Naive thymus-derived CD4-positive, alpha-beta T cell (primary cell): ENCODE measurements at regions of chr2 and their contacts with region 1.

Region 1: GRCh38 chr2:102442967-102443828 is 20.2 kb downstream of the IL18RAP start:
- DNase-seq: peak in 7 of 9 donors; percentile 16 to 58 (median 49)
- ATAC-seq: peak; percentile 89
- H3K4me3 ChIP-seq: no peak overlapping the region
- H3K4me3 Mint-ChIP-seq: peak overlapping the region in 6 of 10 donors; percentile 24 to 71 (median 36)
- H3K27ac ChIP-seq: no peak overlapping the region
- H3K27ac Mint-ChIP-seq: peak overlapping the region in 4 of 9 donors; percentile 19 to 46 (median 30)
- H3K4me1 ChIP-seq: peaks cover 0 to 5% of the 10 kb centered on the region in 2 donors
- H3K4me1 Mint-ChIP-seq: peaks cover 0 to 12% (median 7%) of the 10 kb centered on the region in 7 donors
- H3K27me3 ChIP-seq: no peaks in the 10 kb centered on the region
- H3K27me3 Mint-ChIP-seq: no peaks in the 10 kb centered on the region

Region 2: DNA sequence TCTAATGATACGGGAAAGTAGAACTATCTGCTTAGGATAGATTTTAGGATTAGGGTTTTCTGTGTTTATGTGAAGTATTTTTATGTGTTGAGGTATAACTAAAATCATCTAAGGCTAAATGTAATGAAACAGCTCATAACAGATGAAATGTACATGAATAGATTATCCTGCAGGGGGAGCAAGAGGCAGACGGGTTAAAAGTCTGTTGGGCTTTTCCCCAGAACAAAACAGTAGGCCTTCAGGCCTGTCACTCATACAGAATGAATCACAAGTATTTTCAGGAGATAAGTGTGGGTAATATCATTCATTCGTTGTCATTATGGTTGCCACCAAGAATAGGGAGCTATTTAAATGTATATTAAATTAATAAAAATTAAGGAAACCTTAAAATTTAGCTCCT is 559.3 kb before region 1 on chr2:
- CTCF ChIA-PET with region 1: no interaction called
- POLR2A ChIA-PET with region 1: no interaction called
- intact Hi-C with region 1: loop called (anchors 1 to 2 kb)
- DNase-seq: peak in 5 of 9 donors; percentile 28 to 45 (median 36)
- ATAC-seq: peak; percentile 87
- H3K4me3 ChIP-seq: no peak overlapping the region
- H3K4me3 Mint-ChIP-seq: no peak overlapping the region
- H3K27ac ChIP-seq: no peak overlapping the region
- H3K27ac Mint-ChIP-seq: peak overlapping the region in 4 of 9 donors; percentile 38 to 62 (median 52)
- H3K4me1 ChIP-seq: no peaks in the 10 kb centered on the region
- H3K4me1 Mint-ChIP-seq: peaks cover 0 to 16% (median 5%) of the 10 kb centered on the region in 7 donors
- H3K27me3 ChIP-seq: no peaks in the 10 kb centered on the region
- H3K27me3 Mint-ChIP-seq: no peaks in the 10 kb centered on the region

Region 3: GRCh38 chr2:102187496-102188150 is 255.6 kb before region 1 on chr2:
- CTCF ChIA-PET with region 1: no interaction called
- POLR2A ChIA-PET with region 1: no interaction called
- intact Hi-C with region 1: loop called (anchors 5 kb)
- DNase-seq: peak; percentile 2 to 35 (median 25)
- ATAC-seq: peak; percentile 89
- H3K4me3 ChIP-seq: peak overlapping the region; percentile 54
- H3K4me3 Mint-ChIP-seq: peak overlapping the region; percentile 75 to 89 (median 87)
- H3K27ac ChIP-seq: no peak overlapping the region
- H3K27ac Mint-ChIP-seq: peak overlapping the region in 2 of 9 donors; percentile 26 to 65
- H3K4me1 ChIP-seq: no peaks in the 10 kb centered on the region
- H3K4me1 Mint-ChIP-seq: peaks cover 4 to 22% (median 8%) of the 10 kb centered on the region in 7 donors
- H3K27me3 ChIP-seq: no peaks in the 10 kb centered on the region
- H3K27me3 Mint-ChIP-seq: peaks cover 11 to 43% (median 20%) of the 10 kb centered on the region in 5 donors

Region 4: DNA sequence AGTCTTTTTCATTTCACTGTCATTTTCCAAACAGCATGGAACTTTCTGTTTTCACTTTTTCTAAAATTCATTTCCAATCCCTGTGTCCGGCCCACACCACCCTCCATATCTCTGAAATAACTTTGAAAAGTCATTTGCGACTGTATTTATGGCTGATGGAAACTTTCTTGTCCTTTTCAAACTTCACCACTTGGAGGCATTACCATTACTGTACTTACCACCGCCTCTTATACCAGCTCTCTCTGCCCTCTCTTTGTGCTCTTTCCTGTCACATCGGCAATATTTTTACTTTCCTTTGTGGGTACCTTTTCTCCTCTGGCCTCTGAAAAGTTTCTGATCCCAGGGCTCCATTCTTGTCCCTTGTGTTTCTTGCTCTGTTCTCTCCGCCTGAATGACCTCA is 171.4 kb before region 1 on chr2:
- CTCF ChIA-PET with region 1: interaction called, 7 read pairs
- POLR2A ChIA-PET with region 1: no interaction called
- intact Hi-C with region 1: loop called in 1 of 2 experiments (anchors 1 kb)
- DNase-seq: peak in 4 of 9 donors; percentile 16 to 32 (median 26)
- ATAC-seq: peak; percentile 68
- H3K4me3 ChIP-seq: no peak overlapping the region
- H3K4me3 Mint-ChIP-seq: peak overlapping the region in 4 of 10 donors; percentile 5 to 55 (median 28)
- H3K27ac ChIP-seq: no peak overlapping the region
- H3K27ac Mint-ChIP-seq: peak overlapping the region in 3 of 9 donors; percentile 18 to 32 (median 28)
- H3K4me1 ChIP-seq: peaks cover 0 to 10% of the 10 kb centered on the region in 2 donors
- H3K4me1 Mint-ChIP-seq: peaks cover 7 to 54% (median 10%) of the 10 kb centered on the region in 7 donors
- H3K27me3 ChIP-seq: no peaks in the 10 kb centered on the region
- H3K27me3 Mint-ChIP-seq: peaks cover 0 to 22% (median 0%) of the 10 kb centered on the region in 5 donors

Region 5: GRCh38 chr2:102366406-102367112 is 76.6 kb before region 1 on chr2:
- CTCF ChIA-PET with region 1: no interaction called
- POLR2A ChIA-PET with region 1: interaction called, 3 read pairs
- intact Hi-C with region 1: loop called in 1 of 2 experiments (anchors 2 kb)
- DNase-seq: peak in 6 of 9 donors; percentile 12 to 46 (median 32)
- ATAC-seq: peak; percentile 37
- H3K4me3 ChIP-seq: peak overlapping the region; percentile 39
- H3K4me3 Mint-ChIP-seq: peak overlapping the region; percentile 53 to 79 (median 72)
- H3K27ac ChIP-seq: peak overlapping the region; percentile 56
- H3K27ac Mint-ChIP-seq: peak overlapping the region; percentile 77 to 95 (median 88)
- H3K4me1 ChIP-seq: peaks cover 25 to 40% of the 10 kb centered on the region in 2 donors
- H3K4me1 Mint-ChIP-seq: peaks cover 33 to 74% (median 51%) of the 10 kb centered on the region in 7 donors
- H3K27me3 ChIP-seq: no peaks in the 10 kb centered on the region
- H3K27me3 Mint-ChIP-seq: no peaks in the 10 kb centered on the region

Region 6: DNA sequence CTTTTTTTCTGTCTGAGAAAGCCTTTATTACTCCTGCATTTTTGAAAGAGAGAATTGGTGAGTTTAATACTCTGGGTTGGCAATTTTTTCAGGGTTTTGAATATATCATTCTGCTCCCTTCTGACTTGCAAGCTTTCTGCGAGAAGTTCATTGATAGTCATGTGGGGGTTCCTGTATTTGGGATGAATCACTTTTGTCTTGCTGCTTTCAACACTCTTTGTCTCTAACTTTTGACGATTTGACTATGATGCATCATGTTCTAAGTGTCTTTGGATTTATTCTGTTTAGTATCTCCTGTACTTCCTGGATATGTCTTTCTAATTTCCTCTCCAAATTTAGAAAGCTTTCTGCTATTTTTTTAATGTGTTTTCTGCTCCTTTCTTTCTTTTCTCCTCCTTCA is 135.2 kb after region 1 on chr2:
- CTCF ChIA-PET with region 1: no interaction called
- POLR2A ChIA-PET with region 1: no interaction called
- intact Hi-C with region 1: no loop called
- DNase-seq: no peak
- ATAC-seq: no peak
- H3K4me3 ChIP-seq: no peak overlapping the region
- H3K4me3 Mint-ChIP-seq: no peak overlapping the region
- H3K27ac ChIP-seq: no peak overlapping the region
- H3K27ac Mint-ChIP-seq: no peak overlapping the region
- H3K4me1 ChIP-seq: no peaks in the 10 kb centered on the region
- H3K4me1 Mint-ChIP-seq: peaks cover 1 to 15% (median 7%) of the 10 kb centered on the region in 7 donors
- H3K27me3 ChIP-seq: no peaks in the 10 kb centered on the region
- H3K27me3 Mint-ChIP-seq: peaks cover 15 to 44% (median 24%) of the 10 kb centered on the region in 5 donors

Region 7: GRCh38 chr2:102606363-102606762 is 163.2 kb after region 1 on chr2:
- CTCF ChIA-PET with region 1: no interaction called
- POLR2A ChIA-PET with region 1: no interaction called
- intact Hi-C with region 1: no loop called
- DNase-seq: no peak
- ATAC-seq: no peak
- H3K4me3 ChIP-seq: no peak overlapping the region
- H3K4me3 Mint-ChIP-seq: no peak overlapping the region
- H3K27ac ChIP-seq: no peak overlapping the region
- H3K27ac Mint-ChIP-seq: no peak overlapping the region
- H3K4me1 ChIP-seq: no peaks in the 10 kb centered on the region
- H3K4me1 Mint-ChIP-seq: no peaks in the 10 kb centered on the region
- H3K27me3 ChIP-seq: no peaks in the 10 kb centered on the region
- H3K27me3 Mint-ChIP-seq: peaks cover 13 to 20% (median 17%) of the 10 kb centered on the region in 5 donors

Region 8: GRCh38 chr2:103616891-103617290 is 1173.7 kb after region 1 on chr2:
- CTCF ChIA-PET with region 1: no interaction called
- POLR2A ChIA-PET with region 1: no interaction called
- intact Hi-C with region 1: no loop called
- DNase-seq: no peak
- ATAC-seq: no peak
- H3K4me3 ChIP-seq: no peak overlapping the region
- H3K4me3 Mint-ChIP-seq: no peak overlapping the region
- H3K27ac ChIP-seq: no peak overlapping the region
- H3K27ac Mint-ChIP-seq: no peak overlapping the region
- H3K4me1 ChIP-seq: no peaks in the 10 kb centered on the region
- H3K4me1 Mint-ChIP-seq: no peaks in the 10 kb centered on the region
- H3K27me3 ChIP-seq: no peaks in the 10 kb centered on the region
- H3K27me3 Mint-ChIP-seq: no peaks in the 10 kb centered on the region

Region 9: DNA sequence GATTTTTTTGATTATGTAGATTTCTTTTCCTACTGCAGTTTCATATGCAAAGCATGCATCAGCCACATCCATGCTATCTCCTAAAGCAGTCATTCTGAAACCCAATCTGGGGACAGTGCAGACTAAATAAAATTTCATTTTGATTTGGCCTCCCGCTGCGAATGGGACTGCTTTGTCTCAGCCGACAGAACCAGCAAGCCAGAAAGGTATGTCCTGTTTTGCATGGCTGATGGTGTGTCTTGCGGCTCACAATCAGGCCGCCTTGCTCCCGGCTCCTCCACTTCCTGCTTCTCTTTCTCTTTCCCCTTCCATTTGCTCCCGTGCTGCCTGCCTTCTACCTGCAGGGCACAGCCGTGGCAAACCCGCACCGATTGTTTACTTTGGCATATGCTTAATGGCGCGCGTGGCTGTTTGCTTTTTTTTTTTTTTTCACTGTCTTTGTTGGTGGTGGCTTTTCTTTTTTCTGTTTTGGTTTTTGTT is 1991.2 kb after region 1 on chr2:
- CTCF ChIA-PET with region 1: no interaction called
- POLR2A ChIA-PET with region 1: no interaction called
- intact Hi-C with region 1: no loop called
- DNase-seq: no peak
- ATAC-seq: no peak
- H3K4me3 ChIP-seq: no peak overlapping the region
- H3K4me3 Mint-ChIP-seq: peak overlapping the region; percentile 39 to 78 (median 66)
- H3K27ac ChIP-seq: no peak overlapping the region
- H3K27ac Mint-ChIP-seq: peak overlapping the region in 1 of 9 donors; percentile 41
- H3K4me1 ChIP-seq: no peaks in the 10 kb centered on the region
- H3K4me1 Mint-ChIP-seq: peaks cover 3 to 9% (median 5%) of the 10 kb centered on the region in 7 donors
- H3K27me3 ChIP-seq: no peaks in the 10 kb centered on the region
- H3K27me3 Mint-ChIP-seq: peaks cover 19 to 46% (median 28%) of the 10 kb centered on the region in 5 donors